ENCODE measurements at regions of chr7 and their contacts with region 1.

Region 1: GRCh38 chr7:66740302-66740979 is at the start of gene RABGEF1:
- DNase-seq: peak; percentile 94
- ATAC-seq: peak; percentile 92
- H3K4me3 ChIP-seq: peak within 1 kb of the TSS; percentile 87 to 96 (median 94)
- H3K27ac ChIP-seq: peak within 1 kb of the TSS; percentile 91
- H3K4me1 ChIP-seq: peaks cover 30% of the 10 kb centered on the region
- H3K27me3 ChIP-seq: no peaks in the 10 kb centered on the region; a peak in 1 of 5 replicates
- CTCF ChIP-seq: peak; percentile 13; the same call in 1 of the 2 replicates
- EP300 ChIP-seq: no peak
- POLR2A ChIP-seq: peak; percentile 84 to 85
- RAD21 ChIP-seq: no peak
- total RNA-seq, gene RABGEF1: 22.7 and 27.5 TPM in 2 replicates

Region 2: GRCh38 chr7:66768865-66769832 is 28.7 kb after region 1 on chr7:
- CTCF ChIA-PET with region 1: no interaction called
- POLR2A ChIA-PET with region 1: interaction called, 13 read pairs
- in situ Hi-C with region 1: no loop called
- intact Hi-C with region 1: loop called (anchors 2 kb)
- DNase-seq: no peak
- ATAC-seq: no peak
- H3K4me3 ChIP-seq: no peak overlapping the region
- H3K27ac ChIP-seq: no peak overlapping the region
- H3K4me1 ChIP-seq: peaks cover 31% of the 10 kb centered on the region
- H3K27me3 ChIP-seq: no peaks in the 10 kb centered on the region
- CTCF ChIP-seq: no peak
- EP300 ChIP-seq: no peak
- POLR2A ChIP-seq: no peak
- RAD21 ChIP-seq: no peak

Region 3: DNA sequence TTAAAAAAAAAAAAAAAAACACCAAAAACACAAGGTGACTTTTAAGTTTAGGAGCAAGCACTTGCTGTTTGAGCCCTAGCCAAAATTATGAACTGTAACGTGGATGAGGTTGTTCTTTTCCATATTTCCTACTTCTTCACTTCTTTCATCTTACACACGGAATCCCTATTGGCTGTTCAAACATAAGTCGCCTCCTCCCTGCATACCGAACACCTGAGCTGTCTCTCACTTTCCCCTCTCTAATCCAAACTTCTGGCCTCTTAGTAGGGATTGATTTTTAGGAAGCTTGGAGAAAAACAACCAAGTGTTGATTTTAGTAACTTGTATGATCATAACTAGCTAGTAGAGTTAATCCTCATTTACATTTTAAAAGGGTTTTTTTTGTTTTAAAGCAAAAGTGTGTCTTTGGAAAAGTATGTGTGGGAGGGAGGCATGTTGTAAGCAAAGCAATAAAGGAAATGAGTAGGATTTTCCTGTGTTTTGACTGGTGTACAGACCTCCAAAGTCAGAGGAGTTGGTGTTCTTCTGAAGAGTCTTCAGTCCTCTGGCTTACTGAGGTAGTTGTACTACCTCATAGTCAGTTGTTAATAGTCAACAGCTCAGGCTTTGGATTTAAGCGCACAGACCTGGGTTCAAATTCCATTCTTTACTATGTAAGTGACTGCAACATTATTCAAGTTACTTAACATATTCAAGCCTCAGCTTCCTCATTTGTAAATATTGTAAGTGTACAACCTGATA is 39.4 kb after region 1 on chr7:
- CTCF ChIA-PET with region 1: no interaction called
- POLR2A ChIA-PET with region 1: interaction called, 14 read pairs
- in situ Hi-C with region 1: loop called (anchors 5 kb)
- intact Hi-C with region 1: no loop called
- DNase-seq: peak; percentile 55
- ATAC-seq: peak; percentile 26
- H3K4me3 ChIP-seq: peak overlapping the region in 1 of 3 experiments; percentile 1; a peak in 1 of 6 replicates
- H3K27ac ChIP-seq: peak overlapping the region; percentile 54
- H3K4me1 ChIP-seq: peaks cover 92% of the 10 kb centered on the region
- H3K27me3 ChIP-seq: no peaks in the 10 kb centered on the region
- CTCF ChIP-seq: no peak
- EP300 ChIP-seq: no peak
- POLR2A ChIP-seq: no peak
- RAD21 ChIP-seq: no peak

Measured in HepG2 (cell line).